Heart right ventricle (tissue), 16 donors: ENCODE measurements at regions of chr16 and their contacts with region 1.

Region 1: GRCh38 chr16:48999508-48999907 is 282.1 kb downstream of the CBLN1 start:
- DNase-seq: no peak
- ATAC-seq: peak in 1 of 8 donors; percentile 28
- H3K4me3 ChIP-seq: no peak overlapping the region
- H3K27ac ChIP-seq: no peak overlapping the region
- H3K4me1 ChIP-seq: peaks cover 0 to 11% (median 0%) of the 10 kb centered on the region in 9 donors
- H3K27me3 ChIP-seq: peaks cover 0 to 7% (median 0%) of the 10 kb centered on the region in 7 donors
- CTCF ChIP-seq: no peak

Region 2: GRCh38 chr16:48963901-48964615 is 35.5 kb before region 1 on chr16:
- intact Hi-C with region 1: no loop called
- DNase-seq: no peak
- ATAC-seq: peak in 1 of 8 donors; percentile 23
- H3K4me3 ChIP-seq: no peak overlapping the region
- H3K27ac ChIP-seq: no peak overlapping the region
- H3K4me1 ChIP-seq: peaks cover 0 to 13% (median 0%) of the 10 kb centered on the region in 9 donors
- H3K27me3 ChIP-seq: no peaks in the 10 kb centered on the region
- CTCF ChIP-seq: no peak

Region 3: DNA sequence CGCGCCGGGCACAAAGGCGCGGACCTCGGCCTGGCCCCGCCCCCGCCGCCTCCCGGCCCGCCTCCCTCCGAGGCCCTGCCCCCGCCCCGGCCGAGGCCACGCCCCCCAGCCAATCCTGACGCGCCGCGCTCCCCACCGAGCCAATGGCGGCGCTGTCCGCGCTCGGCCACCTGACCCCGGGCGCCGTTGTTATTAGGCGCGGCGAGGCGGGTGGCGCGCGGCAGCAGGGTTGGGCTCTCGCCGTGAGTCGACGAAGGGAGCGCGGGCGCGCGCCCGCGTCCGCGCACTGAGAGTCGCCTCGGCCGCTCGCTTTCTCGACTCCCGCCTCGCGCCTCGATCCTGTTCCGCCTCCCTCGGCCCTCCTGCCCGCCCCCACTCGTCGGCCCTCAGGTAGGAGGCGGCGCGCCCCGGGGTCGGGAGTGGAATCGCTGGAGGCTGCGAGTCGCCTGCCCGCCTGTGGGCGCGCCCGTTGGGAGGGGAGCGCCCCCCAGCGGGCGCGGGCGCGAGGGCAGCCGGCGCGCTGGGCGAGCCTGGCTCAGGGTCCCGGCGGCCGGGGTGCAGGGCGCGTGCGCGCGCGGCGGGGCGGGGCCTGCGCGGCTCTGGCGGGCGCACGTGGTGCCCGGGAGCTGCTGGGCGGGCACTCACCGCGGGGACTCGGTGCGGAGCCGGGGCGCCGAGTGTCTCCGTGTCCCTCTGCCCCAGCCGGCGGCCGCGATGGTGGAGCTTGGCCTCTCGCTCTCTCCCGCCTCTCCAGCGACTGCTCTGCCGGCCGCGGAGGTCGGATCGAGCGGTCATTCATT is 282.5 kb after region 1 on chr16:
- intact Hi-C with region 1: loop called in 1 of 10 experiments (anchors 5 kb)
- DNase-seq: peak; percentile 84 to 87
- ATAC-seq: peak; percentile 94 to 99 (median 96)
- H3K4me3 ChIP-seq: peak overlapping the region; percentile 11 to 56 (median 51)
- H3K27ac ChIP-seq: peak overlapping the region in 1 of 10 donors; percentile 45
- H3K4me1 ChIP-seq: peaks cover 5 to 58% (median 35%) of the 10 kb centered on the region in 9 donors
- H3K27me3 ChIP-seq: peaks cover 36 to 94% (median 92%) of the 10 kb centered on the region in 7 donors
- CTCF ChIP-seq: peak in 8 of 9 donors; percentile 18 to 54 (median 37)